GM13977 (cell line): ENCODE measurements at regions of chr6 and their contacts with region 1.

Region 1: GRCh38 chr6:163956571-163957407 is 542.3 kb downstream of the QKI start:
- DNase-seq: peak; percentile 85
- CTCF ChIP-seq: peak; percentile 88

Region 2: DNA sequence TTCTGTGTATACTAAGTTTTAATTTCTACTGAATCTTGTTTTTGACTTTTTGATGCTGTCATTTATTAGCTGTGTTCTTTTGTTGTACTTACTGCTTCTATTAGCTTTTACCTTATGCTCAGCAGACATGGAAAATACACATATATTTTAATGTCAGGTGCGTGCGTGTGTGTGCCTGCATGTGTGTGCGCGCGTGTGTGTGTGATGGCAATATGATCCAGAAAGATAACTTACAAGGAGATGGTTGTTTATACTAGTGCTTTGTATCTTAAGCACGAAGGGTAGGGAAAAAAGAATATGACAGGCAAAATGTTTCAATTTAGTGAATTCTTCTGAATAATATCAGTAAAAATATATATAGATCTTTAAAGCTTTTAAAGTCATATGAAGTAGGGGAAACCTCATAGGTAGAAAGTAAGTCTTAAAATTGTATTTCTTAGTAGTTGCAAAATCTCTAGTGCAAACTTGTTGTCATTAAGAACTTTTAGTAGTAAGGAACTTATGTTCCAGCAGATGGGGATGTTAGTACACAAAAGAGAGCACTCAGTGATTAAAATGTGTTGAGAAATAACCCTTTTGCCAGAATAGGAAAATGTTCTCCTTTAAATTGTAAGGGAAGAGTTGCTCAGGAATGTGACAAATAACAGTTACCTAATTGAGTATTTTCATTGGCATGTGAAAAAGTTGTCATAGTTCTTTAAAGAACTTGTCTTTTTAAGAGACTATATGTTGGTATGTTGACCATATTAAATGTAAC is 529.1 kb before region 1 on chr6:
- in situ Hi-C with region 1: loop called (anchors 10 kb)
- DNase-seq: no peak
- CTCF ChIP-seq: peak; percentile 35

Region 3: GRCh38 chr6:163711615-163712565 is 244.9 kb before region 1 on chr6:
- in situ Hi-C with region 1: loop called (anchors 10 kb)
- DNase-seq: peak; percentile 31
- CTCF ChIP-seq: peak; percentile 5

Region 4: DNA sequence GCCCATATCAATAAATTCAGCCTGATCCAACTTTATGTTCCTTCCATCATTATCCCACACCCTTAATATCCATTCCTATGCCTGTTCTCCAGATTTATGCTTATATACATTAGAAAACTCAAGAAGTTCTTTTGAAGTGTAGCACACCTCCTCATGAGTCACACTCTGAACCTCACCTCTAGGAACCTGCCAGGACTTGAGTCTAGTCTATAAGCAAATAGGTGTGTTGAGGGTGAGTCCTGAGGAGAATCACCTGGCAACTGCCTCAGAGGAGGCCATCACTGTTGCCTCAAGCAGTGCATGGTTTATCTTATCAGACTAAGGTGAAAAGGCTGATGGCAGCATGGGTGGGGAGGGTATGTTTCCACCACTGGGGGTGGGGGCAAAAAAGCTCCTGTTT is 855.9 kb after region 1 on chr6:
- in situ Hi-C with region 1: no loop called
- DNase-seq: no peak
- CTCF ChIP-seq: no peak